GM12878 (cell line): ENCODE measurements at regions of chr4 and their contacts with region 1.

Region 1: GRCh38 chr4:40033613-40034012 is 23.0 kb upstream of the N4BP2 start:
- DNase-seq: no peak
- ATAC-seq: no peak
- H3K4me3 ChIP-seq: no peak overlapping the region
- H3K27ac ChIP-seq: no peak overlapping the region
- H3K4me1 ChIP-seq: no peaks in the 10 kb centered on the region
- H3K27me3 ChIP-seq: no peaks in the 10 kb centered on the region
- CTCF ChIP-seq: no peak
- EP300 ChIP-seq: no peak
- POLR2A ChIP-seq: no peak
- RAD21 ChIP-seq: no peak

Region 2: DNA sequence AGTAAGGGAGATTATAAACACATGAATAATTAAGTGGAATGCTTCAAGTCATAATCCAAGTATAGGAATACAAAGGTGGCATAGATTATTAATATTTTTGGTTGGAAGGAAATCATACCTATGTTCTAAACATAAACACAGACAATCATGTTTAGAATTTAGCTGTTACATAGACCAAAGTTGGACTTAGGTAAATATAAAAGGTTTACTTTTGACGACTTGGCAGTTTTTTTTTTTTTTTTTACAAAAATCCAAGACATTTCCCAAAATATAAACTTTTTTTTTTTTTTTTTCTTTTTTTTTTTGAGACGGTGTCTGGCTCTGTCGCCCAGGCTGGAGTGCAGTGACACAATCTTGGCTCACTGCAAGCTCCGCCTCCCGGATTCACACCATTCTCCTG is 19.5 kb after region 1 on chr4:
- CTCF ChIA-PET with region 1: no interaction called
- POLR2A ChIA-PET with region 1: no interaction called
- RAD21 ChIA-PET with region 1: no interaction called
- SMC1A ChIA-PET with region 1: no interaction called
- in situ Hi-C with region 1: no loop called
- intact Hi-C with region 1: no loop called
- DNase-seq: no peak
- ATAC-seq: no peak
- H3K4me3 ChIP-seq: no peak overlapping the region
- H3K27ac ChIP-seq: no peak overlapping the region
- H3K4me1 ChIP-seq: peaks cover 3% of the 10 kb centered on the region; the same call in 1 of the 2 replicates
- H3K27me3 ChIP-seq: no peaks in the 10 kb centered on the region
- CTCF ChIP-seq: no peak
- EP300 ChIP-seq: no peak
- POLR2A ChIP-seq: no peak
- RAD21 ChIP-seq: no peak

Region 3: DNA sequence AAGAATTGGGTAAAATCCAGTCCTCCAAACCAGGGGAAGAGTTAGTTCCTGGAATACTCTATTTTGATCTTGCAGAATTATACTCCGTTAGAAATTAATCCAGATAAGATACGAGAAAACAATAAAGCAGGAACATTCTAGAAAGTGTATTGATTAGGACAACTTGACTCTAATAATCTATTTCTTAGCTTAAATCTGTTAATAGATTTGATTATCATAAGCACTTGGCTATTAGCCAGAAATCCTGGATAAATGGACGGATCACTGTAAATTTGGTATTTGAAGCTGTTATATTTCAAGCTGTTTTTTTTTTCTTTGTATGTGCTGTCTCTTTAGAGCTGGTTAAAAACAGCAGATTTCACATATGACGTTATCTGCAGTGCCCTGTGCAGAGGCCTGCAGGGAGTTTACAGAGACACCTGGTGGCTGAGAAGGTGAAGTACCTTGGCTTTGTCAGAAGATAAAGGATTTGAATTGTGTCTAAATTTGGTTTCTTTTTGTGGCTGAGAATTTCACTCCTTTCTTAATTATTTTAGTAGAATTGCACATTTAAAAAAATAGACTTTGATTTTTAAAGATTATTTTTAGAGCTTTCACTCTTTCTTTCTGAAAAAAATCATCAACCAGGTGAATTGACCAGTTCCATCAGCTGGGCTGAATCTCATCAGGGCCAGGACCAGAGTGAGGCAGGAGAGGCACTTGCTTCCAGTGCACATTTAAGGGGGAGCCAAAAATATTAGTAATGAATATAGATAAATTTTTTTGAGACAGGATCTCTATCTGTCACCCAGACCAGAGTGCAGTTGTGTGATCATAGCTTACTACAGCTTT is 291.8 kb after region 1 on chr4:
- CTCF ChIA-PET with region 1: interaction called, 6 read pairs
- POLR2A ChIA-PET with region 1: no interaction called
- RAD21 ChIA-PET with region 1: interaction called, 10 read pairs
- SMC1A ChIA-PET with region 1: no interaction called
- in situ Hi-C with region 1: no loop called
- intact Hi-C with region 1: no loop called
- DNase-seq: no peak
- ATAC-seq: peak; percentile 98
- H3K4me3 ChIP-seq: no peak overlapping the region
- H3K27ac ChIP-seq: no peak overlapping the region
- H3K4me1 ChIP-seq: no peaks in the 10 kb centered on the region
- H3K27me3 ChIP-seq: no peaks in the 10 kb centered on the region
- CTCF ChIP-seq: peak; percentile 86 to 94 (median 89)
- EP300 ChIP-seq: no peak
- POLR2A ChIP-seq: no peak
- RAD21 ChIP-seq: peak; percentile 96

Region 4: DNA sequence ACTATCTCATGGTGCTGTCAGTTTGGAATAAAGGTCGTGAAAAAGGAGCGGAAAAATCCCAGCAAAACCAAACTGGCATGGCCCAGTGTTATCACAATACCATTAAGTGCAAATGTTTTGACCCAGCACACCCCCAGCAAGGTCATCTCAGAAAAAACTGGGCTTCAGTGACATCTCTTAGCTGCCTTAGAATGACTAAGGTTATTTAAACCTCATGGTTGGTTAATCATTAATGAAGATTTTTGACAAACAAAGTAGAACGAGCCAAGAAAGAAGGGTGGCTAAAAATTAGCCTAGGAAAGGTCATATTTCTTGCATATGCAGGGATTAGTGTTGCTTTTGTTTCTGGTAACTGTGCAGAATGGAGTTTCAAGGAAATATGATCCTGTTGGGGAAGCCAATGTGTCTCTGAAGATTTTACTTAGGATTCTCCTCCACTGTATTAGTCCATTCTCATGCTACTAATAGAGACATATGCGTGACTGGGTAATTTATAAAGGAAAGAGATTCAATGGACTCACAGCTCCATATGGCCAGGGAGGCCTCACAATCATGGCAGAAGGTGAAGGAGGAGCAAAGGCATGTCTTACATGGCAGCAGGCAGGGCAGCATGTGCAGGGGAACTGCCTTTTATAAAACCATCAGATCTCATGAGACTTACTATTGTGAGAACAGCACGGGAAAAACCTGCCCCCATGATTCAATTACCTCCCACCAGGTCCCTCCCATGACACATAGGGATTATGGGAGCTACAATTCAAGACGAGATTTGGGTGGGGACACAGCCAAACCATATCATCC is 385.0 kb after region 1 on chr4:
- CTCF ChIA-PET with region 1: no interaction called
- POLR2A ChIA-PET with region 1: interaction called, 10 read pairs
- RAD21 ChIA-PET with region 1: no interaction called
- SMC1A ChIA-PET with region 1: no interaction called
- in situ Hi-C with region 1: no loop called
- intact Hi-C with region 1: no loop called
- DNase-seq: no peak
- ATAC-seq: peak; percentile 55
- H3K4me3 ChIP-seq: no peak overlapping the region
- H3K27ac ChIP-seq: no peak overlapping the region
- H3K4me1 ChIP-seq: peaks cover 11% of the 10 kb centered on the region; the same call in 1 of the 2 replicates
- H3K27me3 ChIP-seq: no peaks in the 10 kb centered on the region
- CTCF ChIP-seq: no peak
- EP300 ChIP-seq: no peak
- POLR2A ChIP-seq: no peak
- RAD21 ChIP-seq: no peak